ENCODE measurements at regions of chr2 and their contacts with region 1.

Region 1: GRCh38 chr2:158753641-158754611 is 41.2 kb upstream of the DAPL1 start:
- DNase-seq: no peak
- ATAC-seq: peak; percentile 90
- H3K4me3 ChIP-seq: peak overlapping the region; percentile 17
- H3K27ac ChIP-seq: no peak overlapping the region
- H3K4me1 ChIP-seq: peaks cover 4% of the 10 kb centered on the region
- H3K27me3 ChIP-seq: no peaks in the 10 kb centered on the region
- CTCF ChIP-seq: peak; percentile 90

Region 2: GRCh38 chr2:158025255-158025996 is 728.5 kb before region 1 on chr2:
- intact Hi-C with region 1: loop called (anchors 5 kb)
- DNase-seq: no peak
- ATAC-seq: peak; percentile 32
- H3K4me3 ChIP-seq: no peak overlapping the region
- H3K27ac ChIP-seq: no peak overlapping the region
- H3K4me1 ChIP-seq: no peaks in the 10 kb centered on the region
- H3K27me3 ChIP-seq: no peaks in the 10 kb centered on the region
- CTCF ChIP-seq: no peak

Measured in upper lobe of right lung (tissue), 1 donor.